IMR-90 (cell line): ENCODE measurements at regions of chr6 and their contacts with region 1.

Region 1: GRCh38 chr6:86937219-86938079 is at the start of gene HTR1E:
- DNase-seq: peak; percentile 2
- ATAC-seq: peak; percentile 82
- H3K4me3 ChIP-seq: no peak within 1 kb of the TSS
- H3K27ac ChIP-seq: no peak within 1 kb of the TSS
- H3K4me1 ChIP-seq: no peaks in the 10 kb centered on the region
- H3K27me3 ChIP-seq: peaks cover 10% of the 10 kb centered on the region
- CTCF ChIP-seq: peak; percentile 38
- POLR2A ChIP-seq: no peak
- RAD21 ChIP-seq: 0 out of 2 replicates have a peak, but pooled peaks have one; percentile 19
- total RNA-seq, gene HTR1E: not detected in 2 replicates

Region 2: GRCh38 chr6:85923013-85923430 is 1014.4 kb before region 1 on chr6:
- CTCF ChIA-PET with region 1: no interaction called
- POLR2A ChIA-PET with region 1: no interaction called
- dilution Hi-C with region 1: no loop called
- in situ Hi-C with region 1: no loop called
- intact Hi-C with region 1: loop called (anchors 2 kb)
- DNase-seq: peak; percentile 51
- ATAC-seq: peak; percentile 88
- H3K4me3 ChIP-seq: no peak overlapping the region
- H3K27ac ChIP-seq: no peak overlapping the region
- H3K4me1 ChIP-seq: no peaks in the 10 kb centered on the region
- H3K27me3 ChIP-seq: no peaks in the 10 kb centered on the region
- CTCF ChIP-seq: peak; percentile 57
- POLR2A ChIP-seq: no peak
- RAD21 ChIP-seq: peak; percentile 70

Region 3: GRCh38 chr6:86306210-86306609 is 631.2 kb before region 1 on chr6:
- CTCF ChIA-PET with region 1: no interaction called
- POLR2A ChIA-PET with region 1: no interaction called
- dilution Hi-C with region 1: no loop called
- in situ Hi-C with region 1: no loop called
- intact Hi-C with region 1: no loop called
- DNase-seq: no peak
- ATAC-seq: no peak
- H3K4me3 ChIP-seq: no peak overlapping the region
- H3K27ac ChIP-seq: no peak overlapping the region
- H3K4me1 ChIP-seq: no peaks in the 10 kb centered on the region
- H3K27me3 ChIP-seq: no peaks in the 10 kb centered on the region
- CTCF ChIP-seq: no peak
- POLR2A ChIP-seq: no peak
- RAD21 ChIP-seq: no peak

Region 4: GRCh38 chr6:87001494-87001893 is 64.0 kb after region 1 on chr6:
- CTCF ChIA-PET with region 1: no interaction called
- POLR2A ChIA-PET with region 1: no interaction called
- dilution Hi-C with region 1: no loop called
- in situ Hi-C with region 1: no loop called
- intact Hi-C with region 1: no loop called
- DNase-seq: no peak
- ATAC-seq: no peak
- H3K4me3 ChIP-seq: no peak overlapping the region
- H3K27ac ChIP-seq: no peak overlapping the region
- H3K4me1 ChIP-seq: no peaks in the 10 kb centered on the region
- H3K27me3 ChIP-seq: no peaks in the 10 kb centered on the region
- CTCF ChIP-seq: no peak
- POLR2A ChIP-seq: no peak
- RAD21 ChIP-seq: no peak

Region 5: DNA sequence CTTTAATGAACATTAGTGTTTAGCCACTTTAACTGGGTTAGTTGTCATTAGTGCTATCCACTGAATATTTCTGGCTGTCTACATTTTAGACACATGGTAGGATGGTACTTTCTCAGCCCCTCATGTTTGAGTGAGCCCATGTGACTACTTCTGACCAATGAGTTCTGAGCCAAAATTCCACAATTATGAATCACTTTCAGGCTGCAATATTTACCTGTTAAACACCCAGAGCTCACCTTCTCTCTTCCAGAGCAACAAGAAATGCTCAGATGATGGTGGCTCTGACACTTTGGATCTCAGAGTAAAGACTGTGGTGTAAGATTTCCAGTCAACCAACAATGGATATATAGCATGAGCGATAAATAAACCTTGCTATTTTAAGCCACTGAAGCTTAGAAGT is 1135.0 kb after region 1 on chr6:
- CTCF ChIA-PET with region 1: no interaction called
- POLR2A ChIA-PET with region 1: no interaction called
- dilution Hi-C with region 1: no loop called
- in situ Hi-C with region 1: no loop called
- intact Hi-C with region 1: loop called (anchors 5 kb)
- DNase-seq: no peak
- ATAC-seq: no peak
- H3K4me3 ChIP-seq: no peak overlapping the region
- H3K27ac ChIP-seq: no peak overlapping the region
- H3K4me1 ChIP-seq: no peaks in the 10 kb centered on the region
- H3K27me3 ChIP-seq: no peaks in the 10 kb centered on the region
- CTCF ChIP-seq: no peak
- POLR2A ChIP-seq: no peak
- RAD21 ChIP-seq: no peak